SK-N-SH (cell line): ENCODE measurements at regions of chr10 and their contacts with region 1.

Region 1: GRCh38 chr10:34216348-34216945 is 598.6 kb downstream of the PARD3 start:
- DNase-seq: peak; percentile 62
- H3K4me3 ChIP-seq: no peak overlapping the region
- H3K27ac ChIP-seq: peak overlapping the region in 1 of 2 experiments; percentile 65; a peak in 2 of 4 replicates
- H3K4me1 ChIP-seq: peaks cover 0 to 22% of the 10 kb centered on the region in 2 experiments; a peak in 2 of 4 replicates
- H3K27me3 ChIP-seq: no peaks in the 10 kb centered on the region
- CTCF ChIP-seq: no peak
- EP300 ChIP-seq: peak in 1 of 2 experiments; percentile 83; a peak in 1 of 4 replicates
- RAD21 ChIP-seq: peak; percentile 9; the same call in 1 of the 2 replicates

Region 2: GRCh38 chr10:34195364-34196057 is 20.9 kb before region 1 on chr10:
- CTCF ChIA-PET with region 1: interaction called, 10 read pairs
- POLR2A ChIA-PET with region 1: no interaction called
- DNase-seq: no peak
- H3K4me3 ChIP-seq: no peak overlapping the region
- H3K27ac ChIP-seq: no peak overlapping the region
- H3K4me1 ChIP-seq: peaks cover 0 to 22% of the 10 kb centered on the region in 2 experiments; a peak in 2 of 4 replicates
- H3K27me3 ChIP-seq: no peaks in the 10 kb centered on the region
- CTCF ChIP-seq: no peak
- EP300 ChIP-seq: no peak
- RAD21 ChIP-seq: no peak